ENCODE measurements at regions of chr11 and their contacts with region 1.

Region 1: DNA sequence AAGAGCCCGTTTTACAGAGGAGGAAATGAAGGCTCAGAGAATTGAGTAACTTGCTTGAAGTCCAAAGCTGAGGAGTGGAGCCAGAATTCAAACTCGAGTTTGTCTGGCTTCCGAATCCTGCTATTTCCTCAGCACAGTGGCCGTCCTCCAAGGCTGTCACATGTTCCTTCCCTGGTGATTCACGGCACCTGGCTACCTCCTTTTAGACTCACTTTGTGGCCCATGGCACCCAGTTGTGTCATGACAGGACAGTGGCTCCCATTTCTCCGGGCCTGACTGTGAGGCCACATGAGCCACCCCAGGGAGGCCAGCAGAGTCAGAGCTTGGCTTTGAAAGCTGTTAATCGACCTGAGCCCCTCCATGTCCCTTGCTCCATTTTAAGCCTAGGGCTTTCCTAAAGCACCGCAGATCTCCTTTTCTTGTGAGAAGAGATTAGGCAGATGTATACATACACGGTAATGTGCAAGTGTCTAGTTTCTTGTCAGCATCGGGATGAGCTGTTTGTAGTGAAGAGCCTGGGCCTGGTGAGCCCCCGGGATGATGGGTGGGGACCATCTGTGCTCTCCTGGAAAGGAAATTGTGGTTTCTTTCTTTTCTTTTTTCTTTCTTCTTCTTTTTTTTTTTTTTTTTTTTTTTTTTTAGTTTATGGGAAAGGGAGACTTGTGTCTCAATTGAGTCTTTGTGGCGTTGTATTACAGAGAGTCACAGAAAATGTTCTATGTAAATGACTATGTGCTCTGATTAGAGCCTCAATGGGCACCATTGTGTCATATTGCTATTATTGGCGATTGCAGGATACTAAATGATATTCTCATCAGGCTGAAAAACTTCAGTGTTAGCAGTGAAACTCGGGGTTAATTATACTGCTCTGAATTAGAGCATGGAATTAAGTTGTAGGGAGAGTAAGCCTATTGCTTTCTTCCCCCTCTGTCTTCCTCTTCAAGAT is 54.8 kb downstream of the PTPRJ start:
- DNase-seq: no peak
- ATAC-seq: no peak
- H3K4me3 ChIP-seq: no peak overlapping the region
- H3K27ac ChIP-seq: no peak overlapping the region
- H3K4me1 ChIP-seq: peaks cover 49% of the 10 kb centered on the region
- H3K27me3 ChIP-seq: no peaks in the 10 kb centered on the region
- CTCF ChIP-seq: no peak
- EP300 ChIP-seq: no peak
- POLR2A ChIP-seq: no peak
- RAD21 ChIP-seq: no peak

Region 2: DNA sequence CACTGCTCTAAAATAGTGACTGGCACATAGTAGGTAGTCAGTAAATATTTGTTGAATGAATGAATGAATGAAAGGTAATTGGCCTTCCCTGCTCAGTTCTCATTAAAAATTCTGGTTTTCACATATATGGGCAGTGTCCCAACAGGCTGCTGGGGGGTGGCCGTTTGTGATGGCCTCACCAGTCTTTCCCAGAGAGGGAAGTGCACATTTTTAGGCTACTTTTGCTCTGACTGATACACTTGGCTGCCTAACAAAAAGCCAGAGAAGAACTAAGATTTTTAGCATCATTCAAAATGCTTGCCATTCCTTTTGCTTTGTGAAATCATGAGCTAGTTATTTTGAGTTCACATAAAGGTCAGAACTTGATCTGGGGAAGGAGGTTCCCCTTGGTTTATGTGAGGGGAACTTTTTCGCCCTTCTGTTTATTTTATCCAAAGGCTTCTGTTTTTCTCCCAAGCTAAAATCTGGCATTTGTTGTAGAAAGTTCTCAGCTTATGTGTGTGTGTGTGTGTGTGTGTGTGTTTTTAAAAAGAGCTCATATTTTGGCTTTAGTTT is 28.3 kb after region 1 on chr11:
- CTCF ChIA-PET with region 1: no interaction called
- POLR2A ChIA-PET with region 1: no interaction called
- RAD21 ChIA-PET with region 1: no interaction called
- SMC1A ChIA-PET with region 1: no interaction called
- in situ Hi-C with region 1: no loop called
- intact Hi-C with region 1: no loop called
- DNase-seq: no peak
- ATAC-seq: no peak
- H3K4me3 ChIP-seq: no peak overlapping the region
- H3K27ac ChIP-seq: peak overlapping the region; percentile 56; the same call in 1 of the 2 replicates
- H3K4me1 ChIP-seq: peaks cover 20% of the 10 kb centered on the region
- H3K27me3 ChIP-seq: no peaks in the 10 kb centered on the region
- CTCF ChIP-seq: no peak
- EP300 ChIP-seq: no peak
- POLR2A ChIP-seq: no peak
- RAD21 ChIP-seq: no peak

Region 3: DNA sequence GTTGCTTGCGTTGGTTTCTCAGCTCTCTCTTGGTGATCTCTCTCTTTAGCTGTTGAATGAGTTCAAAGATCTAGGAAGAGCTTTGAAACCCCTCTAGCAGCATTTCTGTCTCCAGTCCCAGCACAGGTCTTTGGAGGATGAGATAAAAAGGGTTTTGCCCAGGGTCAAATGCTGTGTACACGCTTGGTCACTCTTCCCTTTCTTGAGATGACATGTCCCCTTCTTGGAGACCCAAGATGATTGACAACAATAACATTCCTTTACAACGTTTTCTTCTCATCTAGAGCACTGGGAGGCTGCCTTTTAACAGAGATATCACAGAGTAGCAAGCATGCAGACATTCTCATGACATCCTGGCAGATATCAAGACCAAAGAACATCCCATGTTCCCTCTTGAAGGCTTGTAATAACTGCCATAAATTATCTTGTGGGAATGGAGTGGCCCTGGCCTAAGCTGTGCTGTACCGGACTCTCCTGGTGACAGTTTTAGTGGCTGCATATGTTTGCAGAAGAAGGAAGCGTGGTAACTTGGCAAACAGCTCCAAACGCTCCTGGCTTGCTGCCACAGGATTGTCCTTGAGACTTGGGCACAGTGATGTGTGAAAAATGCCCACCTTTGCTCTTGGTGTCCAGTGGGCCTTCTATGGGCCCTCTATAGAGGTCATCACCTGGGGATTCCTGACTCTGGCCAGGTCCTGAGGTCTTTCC is 52.9 kb after region 1 on chr11:
- CTCF ChIA-PET with region 1: interaction called, 5 read pairs
- POLR2A ChIA-PET with region 1: no interaction called
- RAD21 ChIA-PET with region 1: no interaction called
- SMC1A ChIA-PET with region 1: no interaction called
- in situ Hi-C with region 1: no loop called
- intact Hi-C with region 1: loop called (anchors 5 kb)
- DNase-seq: no peak
- ATAC-seq: no peak; the same call in 1 of the 3 replicates
- H3K4me3 ChIP-seq: no peak overlapping the region
- H3K27ac ChIP-seq: no peak overlapping the region
- H3K4me1 ChIP-seq: peaks cover 12% of the 10 kb centered on the region
- H3K27me3 ChIP-seq: no peaks in the 10 kb centered on the region
- CTCF ChIP-seq: no peak
- EP300 ChIP-seq: no peak
- POLR2A ChIP-seq: no peak
- RAD21 ChIP-seq: no peak

Measured in GM12878 (cell line).